Panc1 (cell line): ENCODE measurements at regions of chr3 and their contacts with region 1.

Region 1: GRCh38 chr3:155727558-155728242 is 17.2 kb downstream of the PLCH1 start:
- DNase-seq: no peak
- ATAC-seq: no peak
- H3K4me3 ChIP-seq: no peak overlapping the region
- H3K27ac ChIP-seq: no peak overlapping the region
- H3K4me1 ChIP-seq: no peaks in the 10 kb centered on the region
- H3K27me3 ChIP-seq: no peaks in the 10 kb centered on the region
- CTCF ChIP-seq: no peak

Region 2: GRCh38 chr3:155088706-155089345 is 638.9 kb before region 1 on chr3:
- CTCF ChIA-PET with region 1: no interaction called
- POLR2A ChIA-PET with region 1: no interaction called
- in situ Hi-C with region 1: no loop called
- intact Hi-C with region 1: loop called (anchors 5 kb)
- DNase-seq: no peak
- ATAC-seq: no peak
- H3K4me3 ChIP-seq: no peak overlapping the region
- H3K27ac ChIP-seq: no peak overlapping the region
- H3K4me1 ChIP-seq: no peaks in the 10 kb centered on the region
- H3K27me3 ChIP-seq: no peaks in the 10 kb centered on the region
- CTCF ChIP-seq: no peak

Region 3: GRCh38 chr3:155370198-155370597 is 357.5 kb before region 1 on chr3:
- CTCF ChIA-PET with region 1: no interaction called
- POLR2A ChIA-PET with region 1: no interaction called
- in situ Hi-C with region 1: no loop called
- intact Hi-C with region 1: no loop called
- DNase-seq: no peak
- ATAC-seq: no peak
- H3K4me3 ChIP-seq: no peak overlapping the region
- H3K27ac ChIP-seq: no peak overlapping the region
- H3K4me1 ChIP-seq: no peaks in the 10 kb centered on the region
- H3K27me3 ChIP-seq: no peaks in the 10 kb centered on the region
- CTCF ChIP-seq: no peak